ENCODE measurements at regions of chr11 and their contacts with region 1.

Region 1: GRCh38 chr11:58788355-58789023 is 56.0 kb downstream of the GLYATL2 start:
- DNase-seq: peak; percentile 78
- H3K4me3 Mint-ChIP-seq: no peak overlapping the region
- H3K27ac Mint-ChIP-seq: no peak overlapping the region
- H3K4me1 Mint-ChIP-seq: peaks cover 7% of the 10 kb centered on the region
- H3K27me3 Mint-ChIP-seq: no peaks in the 10 kb centered on the region
- CTCF ChIP-seq: peak; percentile 89

Region 2: GRCh38 chr11:58567889-58568512 is 220.5 kb before region 1 on chr11:
- CTCF ChIA-PET with region 1: interaction called, 13 read pairs
- POLR2A ChIA-PET with region 1: no interaction called
- intact Hi-C with region 1: no loop called
- DNase-seq: peak; percentile 70
- H3K4me3 Mint-ChIP-seq: no peak overlapping the region
- H3K27ac Mint-ChIP-seq: no peak overlapping the region
- H3K4me1 Mint-ChIP-seq: peaks cover 9% of the 10 kb centered on the region
- H3K27me3 Mint-ChIP-seq: no peaks in the 10 kb centered on the region
- CTCF ChIP-seq: peak; percentile 65

Region 3: DNA sequence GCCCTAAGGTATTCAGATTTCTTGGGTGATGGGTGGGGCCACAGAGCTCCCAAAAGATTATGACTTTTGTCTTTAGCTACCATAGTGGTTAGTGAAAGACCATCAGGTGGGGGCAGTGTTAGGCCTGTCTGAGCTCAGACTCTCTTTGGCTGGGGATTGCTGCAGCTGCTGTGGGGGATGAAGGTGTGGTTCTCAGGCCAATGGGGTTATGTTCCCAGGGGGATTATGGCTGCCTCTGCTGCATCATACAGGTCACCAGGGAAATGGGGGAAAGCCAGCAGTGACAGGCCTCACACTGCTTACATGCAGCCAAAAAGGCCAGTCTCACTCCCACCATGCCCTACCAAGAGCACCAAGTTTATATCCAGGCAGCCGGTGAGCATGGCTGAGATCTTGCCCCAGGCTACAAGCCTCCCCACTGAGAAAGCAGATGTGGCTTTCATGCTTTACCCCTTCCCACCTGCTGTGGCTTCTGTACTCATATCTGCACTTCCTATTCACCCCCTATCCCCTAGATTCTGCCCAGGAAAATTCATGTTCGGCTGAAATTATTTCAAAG is 141.3 kb before region 1 on chr11:
- CTCF ChIA-PET with region 1: interaction called, 115 read pairs
- POLR2A ChIA-PET with region 1: no interaction called
- intact Hi-C with region 1: no loop called
- DNase-seq: no peak
- H3K4me3 Mint-ChIP-seq: no peak overlapping the region
- H3K27ac Mint-ChIP-seq: no peak overlapping the region
- H3K4me1 Mint-ChIP-seq: no peaks in the 10 kb centered on the region
- H3K27me3 Mint-ChIP-seq: no peaks in the 10 kb centered on the region
- CTCF ChIP-seq: no peak

Region 4: DNA sequence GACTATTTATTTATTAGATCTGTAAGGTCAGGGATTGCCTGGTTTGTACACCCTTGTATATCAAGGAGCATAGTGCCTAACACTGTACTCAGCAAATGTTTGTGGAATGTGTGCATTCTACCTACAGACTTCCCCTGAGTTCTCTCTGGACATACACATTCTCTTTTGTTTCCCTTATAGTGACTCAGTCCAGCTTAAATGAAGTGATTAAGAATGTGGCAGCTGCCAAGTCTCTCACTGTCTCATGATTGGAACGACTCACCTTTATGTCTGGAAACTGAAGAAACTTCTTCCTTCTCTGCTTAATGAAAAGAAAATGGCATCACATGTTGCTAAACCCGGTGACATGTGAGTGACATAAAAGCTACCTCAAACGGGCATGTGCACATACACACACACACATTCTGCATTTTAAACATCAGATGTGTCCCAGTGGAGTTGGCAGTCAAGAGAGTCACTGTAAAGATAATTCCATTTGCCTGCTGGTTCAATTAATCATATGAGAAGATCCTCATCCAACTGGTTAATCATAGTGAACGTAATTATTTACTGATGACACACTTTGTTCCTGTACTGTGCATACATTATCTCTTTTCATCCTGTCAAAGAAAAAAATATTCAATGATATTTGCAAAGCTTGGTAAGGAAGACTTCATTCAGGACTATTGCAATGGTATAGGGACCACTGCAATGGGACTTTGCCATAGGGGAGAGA is 99.5 kb before region 1 on chr11:
- CTCF ChIA-PET with region 1: interaction called, 15 read pairs
- POLR2A ChIA-PET with region 1: no interaction called
- intact Hi-C with region 1: no loop called
- DNase-seq: peak; percentile 37
- H3K4me3 Mint-ChIP-seq: no peak overlapping the region
- H3K27ac Mint-ChIP-seq: no peak overlapping the region
- H3K4me1 Mint-ChIP-seq: peaks cover 9% of the 10 kb centered on the region
- H3K27me3 Mint-ChIP-seq: no peaks in the 10 kb centered on the region
- CTCF ChIP-seq: no peak

Region 5: GRCh38 chr11:58776891-58777710 is 11.4 kb before region 1 on chr11:
- CTCF ChIA-PET with region 1: interaction called, 20 read pairs
- POLR2A ChIA-PET with region 1: interaction called, 3 read pairs
- intact Hi-C with region 1: no loop called
- DNase-seq: no peak
- H3K4me3 Mint-ChIP-seq: no peak overlapping the region
- H3K27ac Mint-ChIP-seq: no peak overlapping the region
- H3K4me1 Mint-ChIP-seq: peaks cover 6% of the 10 kb centered on the region
- H3K27me3 Mint-ChIP-seq: no peaks in the 10 kb centered on the region
- CTCF ChIP-seq: no peak